Activated CD4-positive, alpha-beta T cell treated with anti-CD3 and anti-CD28 coated beads, Interleukin-2, amount 10 ng/mL, durations not matched to agents 24 days and 14 days (primary cell): ENCODE measurements at regions of chr2 and their contacts with region 1.

Region 1: DNA sequence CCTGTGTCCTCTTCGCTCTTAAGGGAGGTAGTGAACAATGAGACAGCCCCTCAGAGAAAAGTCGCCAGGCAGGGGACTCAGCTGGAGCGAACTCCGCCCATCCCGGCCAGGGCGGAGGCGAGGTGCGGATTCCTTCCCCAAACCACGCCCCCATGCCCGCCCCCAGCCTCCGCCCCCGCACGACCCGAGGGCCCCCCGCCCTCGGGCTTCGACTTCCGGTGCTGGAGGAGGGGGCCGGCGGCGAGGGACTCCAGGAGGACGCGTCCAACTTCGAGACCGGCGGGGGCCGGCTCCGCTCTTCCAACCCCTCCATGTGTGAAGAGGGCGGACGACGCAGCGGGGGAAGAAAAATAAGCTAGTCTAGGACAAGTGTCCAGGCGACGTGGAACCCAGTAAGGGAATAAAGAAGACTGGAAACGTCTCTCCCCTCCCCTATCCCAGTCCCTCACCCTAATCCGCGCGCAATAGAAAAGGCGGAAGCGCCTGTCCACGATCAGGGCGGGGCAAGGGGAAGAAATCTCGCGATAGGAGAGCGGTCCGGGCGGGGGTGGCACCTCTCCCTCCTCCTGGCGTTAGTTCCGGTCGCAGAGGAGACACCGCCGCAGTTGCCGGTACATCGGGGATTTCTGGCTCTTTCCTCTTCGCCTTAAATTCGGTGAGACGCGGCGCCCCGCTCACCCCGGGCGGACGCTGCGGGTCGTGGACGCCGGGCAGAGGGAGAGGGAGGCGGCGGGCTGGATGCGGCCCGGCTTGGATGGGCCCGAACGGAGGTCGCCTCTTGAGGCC is at the start of gene BZW1:
- DNase-seq: peak; percentile 99
- H3K4me3 Mint-ChIP-seq: peak within 1 kb of the TSS; percentile 100
- H3K27ac Mint-ChIP-seq: peak within 1 kb of the TSS; percentile 99
- H3K4me1 Mint-ChIP-seq: peaks cover 43% of the 10 kb centered on the region
- H3K27me3 Mint-ChIP-seq: peaks cover 2% of the 10 kb centered on the region
- total RNA-seq, gene BZW1: 489 and 490 TPM in 2 replicates

Region 2: DNA sequence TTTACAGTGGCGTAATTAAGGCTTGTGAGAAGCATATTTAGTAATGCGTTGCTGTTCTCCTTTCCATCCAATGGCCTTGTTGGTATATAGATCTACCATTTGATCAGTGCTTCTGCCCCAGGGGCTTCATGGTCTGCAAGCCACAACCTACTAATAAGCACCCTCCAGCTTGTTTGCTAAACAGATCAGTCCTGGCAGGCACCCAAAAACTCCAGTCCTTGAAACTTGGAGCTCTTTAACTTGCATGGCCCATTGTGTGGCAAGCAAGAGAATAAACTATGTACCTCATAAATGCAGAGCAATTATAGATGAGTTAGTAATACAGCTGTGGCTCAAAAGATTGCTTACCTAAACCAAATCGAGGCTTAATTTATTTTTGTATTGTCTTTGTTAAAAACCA is 1119.0 kb before region 1 on chr2:
- intact Hi-C with region 1: no loop called
- DNase-seq: no peak
- H3K4me3 Mint-ChIP-seq: no peak overlapping the region
- H3K27ac Mint-ChIP-seq: no peak overlapping the region
- H3K4me1 Mint-ChIP-seq: no peaks in the 10 kb centered on the region
- H3K27me3 Mint-ChIP-seq: peaks cover 1% of the 10 kb centered on the region

Region 3: DNA sequence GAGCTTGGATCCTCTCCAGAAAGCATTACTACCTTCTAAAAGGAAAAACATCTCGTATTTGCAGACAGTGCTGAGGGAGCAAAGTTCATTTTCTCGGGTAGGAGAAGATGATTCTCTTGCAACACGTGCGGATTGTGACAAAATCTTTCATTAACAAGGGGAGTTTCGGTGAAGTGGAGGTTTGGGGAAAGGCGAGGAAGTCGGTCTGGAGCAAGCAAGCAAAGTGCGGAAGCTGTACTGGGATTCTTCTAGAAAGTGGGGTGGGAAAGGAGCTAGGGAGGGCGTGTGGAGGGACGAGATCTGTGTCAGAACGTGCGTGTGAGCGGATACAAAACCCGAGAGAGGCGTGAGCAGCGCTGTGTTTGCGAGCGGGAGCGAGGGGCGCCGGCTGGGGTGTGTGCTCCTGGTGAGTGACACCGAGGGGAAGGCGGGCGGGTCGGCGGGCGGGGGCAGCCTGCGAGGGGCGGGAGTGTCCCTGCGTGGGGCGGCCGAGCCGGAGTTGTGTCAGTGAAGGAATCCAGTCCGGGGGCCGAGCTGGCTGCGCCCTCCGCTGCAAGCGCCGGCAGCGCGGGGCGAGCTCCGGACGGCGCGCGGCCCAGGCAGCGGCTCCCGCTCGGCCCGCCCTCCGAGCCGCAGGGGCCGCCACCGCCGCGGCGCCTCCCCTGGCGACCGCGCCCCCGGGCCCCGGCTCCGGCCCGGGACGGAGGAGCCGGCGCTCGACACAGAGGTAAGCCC is 505.2 kb before region 1 on chr2 and contains the start of gene SPATS2L:
- intact Hi-C with region 1: loop called (anchors 5 kb)
- DNase-seq: peak; percentile 88
- H3K4me3 Mint-ChIP-seq: peak within 1 kb of the TSS; percentile 90
- H3K27ac Mint-ChIP-seq: peak within 1 kb of the TSS; percentile 88
- H3K4me1 Mint-ChIP-seq: peaks cover 29% of the 10 kb centered on the region
- H3K27me3 Mint-ChIP-seq: peaks cover 25% of the 10 kb centered on the region
- total RNA-seq, gene SPATS2L: 42.0 and 42.9 TPM in 2 replicates

Region 4: GRCh38 chr2:200703127-200703925 is 108.2 kb before region 1 on chr2:
- intact Hi-C with region 1: loop called (anchors 1 kb)
- DNase-seq: peak; percentile 80
- H3K4me3 Mint-ChIP-seq: peak overlapping the region; percentile 23
- H3K27ac Mint-ChIP-seq: peak overlapping the region; percentile 78
- H3K4me1 Mint-ChIP-seq: peaks cover 28% of the 10 kb centered on the region
- H3K27me3 Mint-ChIP-seq: no peaks in the 10 kb centered on the region

Region 5: DNA sequence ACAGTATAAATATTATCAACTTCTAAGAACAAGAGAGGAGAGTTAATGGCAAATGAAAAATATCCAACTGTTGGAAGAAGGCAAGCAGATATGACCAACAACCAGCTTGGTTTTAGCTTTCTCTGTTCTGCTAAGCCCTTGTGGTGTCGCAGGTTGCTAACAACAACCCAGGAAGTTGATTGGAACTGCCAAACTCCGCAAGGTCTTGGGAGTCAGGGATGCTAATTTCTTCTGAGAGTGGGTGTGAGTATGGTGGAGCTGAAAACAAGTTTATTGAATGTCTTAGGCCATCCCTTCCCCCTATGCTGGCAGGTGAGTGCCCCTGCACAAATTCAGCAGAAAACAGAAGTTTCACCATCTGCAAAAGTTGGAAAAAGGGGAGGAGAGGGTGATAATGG is 17.7 kb after region 1 on chr2:
- intact Hi-C with region 1: loop called (anchors 2 kb)
- DNase-seq: no peak
- H3K4me3 Mint-ChIP-seq: no peak overlapping the region
- H3K27ac Mint-ChIP-seq: no peak overlapping the region
- H3K4me1 Mint-ChIP-seq: peaks cover 7% of the 10 kb centered on the region
- H3K27me3 Mint-ChIP-seq: peaks cover 2% of the 10 kb centered on the region

Region 6: GRCh38 chr2:200944467-200945394 is 133.2 kb after region 1 on chr2:
- intact Hi-C with region 1: no loop called
- DNase-seq: peak; percentile 67
- H3K4me3 Mint-ChIP-seq: no peak overlapping the region
- H3K27ac Mint-ChIP-seq: peak overlapping the region; percentile 78
- H3K4me1 Mint-ChIP-seq: peaks cover 20% of the 10 kb centered on the region
- H3K27me3 Mint-ChIP-seq: no peaks in the 10 kb centered on the region

Region 7: GRCh38 chr2:201071479-201072200 is 260.1 kb after region 1 on chr2 and contains the starts of genes HYCC2 and NDUFB3:
- intact Hi-C with region 1: loop called (anchors 5 kb)
- DNase-seq: peak; percentile 98
- H3K4me3 Mint-ChIP-seq: peak within 1 kb of the TSS; percentile 92
- H3K27ac Mint-ChIP-seq: peak within 1 kb of the TSS; percentile 91
- H3K4me1 Mint-ChIP-seq: peaks cover 37% of the 10 kb centered on the region
- H3K27me3 Mint-ChIP-seq: no peaks in the 10 kb centered on the region
- total RNA-seq, gene HYCC2: 24.4 and 26.2 TPM in 2 replicates
- total RNA-seq, gene NDUFB3: 112 and 113 TPM in 2 replicates

Region 8: DNA sequence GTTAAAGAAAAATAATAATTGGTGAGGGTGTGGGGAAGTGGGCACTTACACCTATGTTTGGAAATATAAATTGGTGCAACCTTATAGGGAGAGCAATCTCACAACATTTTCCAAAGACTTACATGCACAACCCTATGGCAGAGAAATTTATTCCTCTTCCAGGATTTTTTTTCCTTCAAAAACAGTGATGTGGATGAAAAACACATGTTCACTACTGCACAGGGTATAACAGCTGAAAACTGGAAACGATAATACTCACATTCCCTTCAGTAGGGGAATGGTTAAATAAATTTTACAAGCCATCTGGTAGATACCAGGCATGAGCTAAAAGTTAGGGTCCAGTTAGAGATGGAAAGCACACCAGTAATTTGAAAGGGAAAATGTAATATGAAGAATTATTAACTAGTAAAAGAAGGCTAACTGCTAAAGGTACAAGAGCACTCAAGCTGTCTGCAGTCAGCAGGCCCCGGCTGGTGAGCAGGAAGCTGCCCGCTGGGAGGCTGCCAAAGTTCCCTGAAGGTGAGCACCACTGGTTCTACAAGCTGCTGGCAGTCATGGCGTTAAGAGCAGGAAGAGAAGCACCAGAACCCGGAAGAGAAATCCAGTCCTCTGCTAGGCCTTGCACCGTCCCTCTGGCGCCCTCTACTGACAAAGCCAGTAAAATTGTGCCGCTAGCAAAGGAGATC is 420.4 kb after region 1 on chr2:
- intact Hi-C with region 1: loop called (anchors 5 kb)
- DNase-seq: peak; percentile 97
- H3K4me3 Mint-ChIP-seq: peak overlapping the region; percentile 78
- H3K27ac Mint-ChIP-seq: peak overlapping the region; percentile 91
- H3K4me1 Mint-ChIP-seq: peaks cover 47% of the 10 kb centered on the region
- H3K27me3 Mint-ChIP-seq: no peaks in the 10 kb centered on the region

Region 9: DNA sequence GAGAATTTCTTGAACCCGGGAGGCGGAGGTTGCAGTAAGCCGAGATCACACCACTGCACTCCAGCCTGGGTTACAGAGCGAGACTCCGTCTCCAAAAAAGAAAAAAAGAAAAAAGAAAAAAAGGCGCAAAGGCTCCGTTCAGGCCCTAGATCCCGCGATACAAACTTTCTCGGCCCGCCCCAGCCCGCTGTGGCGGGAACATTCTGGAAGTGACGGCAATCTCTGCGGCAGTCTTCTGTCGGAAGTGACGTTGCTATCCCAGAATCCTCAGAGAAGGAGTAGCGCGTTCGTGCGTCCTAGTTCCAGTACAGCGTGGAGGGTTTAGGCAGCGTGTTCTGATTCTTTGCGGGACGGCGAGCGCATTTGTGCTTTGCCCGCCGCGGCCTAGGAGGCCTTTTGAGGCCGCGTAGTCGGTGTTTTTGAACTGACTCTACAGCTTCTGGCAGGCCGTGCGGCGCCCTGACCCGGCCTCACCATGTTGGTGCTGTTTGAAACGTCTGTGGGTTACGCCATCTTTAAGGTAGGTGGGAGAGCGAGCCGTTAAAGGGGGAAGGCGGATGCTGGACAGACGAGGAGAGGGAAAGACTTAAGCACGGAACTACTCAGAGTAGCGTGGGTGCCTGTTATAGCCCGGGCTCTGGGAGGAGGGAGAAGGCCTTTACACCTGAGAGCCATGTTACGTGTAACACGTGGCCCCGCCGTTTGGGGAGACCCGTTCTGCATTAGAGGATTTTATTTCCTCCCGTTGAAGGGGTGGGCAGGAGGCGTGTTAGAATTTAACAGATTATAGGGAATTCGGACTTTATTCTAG is 1454.1 kb after region 1 on chr2 and contains the start of gene NOP58:
- intact Hi-C with region 1: loop called (anchors 5 kb)
- DNase-seq: peak; percentile 98
- H3K4me3 Mint-ChIP-seq: peak within 1 kb of the TSS; percentile 65
- H3K27ac Mint-ChIP-seq: peak within 1 kb of the TSS; percentile 80
- H3K4me1 Mint-ChIP-seq: peaks cover 19% of the 10 kb centered on the region
- H3K27me3 Mint-ChIP-seq: no peaks in the 10 kb centered on the region
- total RNA-seq, gene NOP58: 221 and 228 TPM in 2 replicates